ENCODE measurements at regions of chr5 and their contacts with region 1.

Region 1: GRCh38 chr5:154405078-154405792 is 40.6 kb upstream of the SAP30L start:
- DNase-seq: peak; percentile 82
- ATAC-seq: peak; percentile 98
- H3K4me3 ChIP-seq: peak overlapping the region in 4 of 5 experiments; percentile 15 to 48 (median 40)
- H3K4me3 Mint-ChIP-seq: peak overlapping the region; percentile 64
- H3K27ac ChIP-seq: no peak overlapping the region
- H3K27ac Mint-ChIP-seq: no peak overlapping the region
- H3K4me1 ChIP-seq: peaks cover 3 to 11% of the 10 kb centered on the region in 2 donors
- H3K4me1 Mint-ChIP-seq: peaks cover 13% of the 10 kb centered on the region
- H3K27me3 ChIP-seq: no peaks in the 10 kb centered on the region
- H3K27me3 Mint-ChIP-seq: no peaks in the 10 kb centered on the region
- CTCF ChIP-seq: peak; percentile 87

Region 2: GRCh38 chr5:153974131-153974812 is 431.0 kb before region 1 on chr5:
- CTCF ChIA-PET with region 1: interaction called, 25 read pairs
- POLR2A ChIA-PET with region 1: no interaction called
- intact Hi-C with region 1: no loop called
- DNase-seq: peak; percentile 49
- ATAC-seq: no peak
- H3K4me3 ChIP-seq: no peak overlapping the region
- H3K4me3 Mint-ChIP-seq: no peak overlapping the region
- H3K27ac ChIP-seq: no peak overlapping the region
- H3K27ac Mint-ChIP-seq: no peak overlapping the region
- H3K4me1 ChIP-seq: peaks cover 0 to 3% of the 10 kb centered on the region in 2 donors
- H3K4me1 Mint-ChIP-seq: no peaks in the 10 kb centered on the region
- H3K27me3 ChIP-seq: peaks cover 0 to 8% (median 3%) of the 10 kb centered on the region in 4 experiments
- H3K27me3 Mint-ChIP-seq: peaks cover 32% of the 10 kb centered on the region
- CTCF ChIP-seq: peak; percentile 80

Region 3: GRCh38 chr5:154077696-154078095 is 327.5 kb before region 1 on chr5:
- CTCF ChIA-PET with region 1: interaction called, 295 read pairs
- POLR2A ChIA-PET with region 1: interaction called, 3 read pairs
- intact Hi-C with region 1: no loop called
- DNase-seq: no peak
- ATAC-seq: no peak
- H3K4me3 ChIP-seq: no peak overlapping the region
- H3K4me3 Mint-ChIP-seq: no peak overlapping the region
- H3K27ac ChIP-seq: no peak overlapping the region
- H3K27ac Mint-ChIP-seq: no peak overlapping the region
- H3K4me1 ChIP-seq: no peaks in the 10 kb centered on the region
- H3K4me1 Mint-ChIP-seq: no peaks in the 10 kb centered on the region
- H3K27me3 ChIP-seq: no peaks in the 10 kb centered on the region
- H3K27me3 Mint-ChIP-seq: peaks cover 14% of the 10 kb centered on the region
- CTCF ChIP-seq: no peak

Region 4: GRCh38 chr5:154179846-154180710 is 225.2 kb before region 1 on chr5:
- CTCF ChIA-PET with region 1: interaction called, 36 read pairs
- POLR2A ChIA-PET with region 1: no interaction called
- intact Hi-C with region 1: no loop called
- DNase-seq: peak; percentile 64
- ATAC-seq: peak; percentile 84
- H3K4me3 ChIP-seq: no peak overlapping the region
- H3K4me3 Mint-ChIP-seq: no peak overlapping the region
- H3K27ac ChIP-seq: no peak overlapping the region
- H3K27ac Mint-ChIP-seq: no peak overlapping the region
- H3K4me1 ChIP-seq: peaks cover 0 to 7% of the 10 kb centered on the region in 2 donors
- H3K4me1 Mint-ChIP-seq: peaks cover 18% of the 10 kb centered on the region
- H3K27me3 ChIP-seq: no peaks in the 10 kb centered on the region
- H3K27me3 Mint-ChIP-seq: peaks cover 14% of the 10 kb centered on the region
- CTCF ChIP-seq: peak; percentile 92

Region 5: GRCh38 chr5:154196955-154197652 is 208.1 kb before region 1 on chr5:
- CTCF ChIA-PET with region 1: interaction called, 17 read pairs
- POLR2A ChIA-PET with region 1: no interaction called
- intact Hi-C with region 1: no loop called
- DNase-seq: peak; percentile 17
- ATAC-seq: no peak
- H3K4me3 ChIP-seq: no peak overlapping the region
- H3K4me3 Mint-ChIP-seq: peak overlapping the region; percentile 12
- H3K27ac ChIP-seq: no peak overlapping the region
- H3K27ac Mint-ChIP-seq: no peak overlapping the region
- H3K4me1 ChIP-seq: peaks cover 17 to 37% of the 10 kb centered on the region in 2 donors
- H3K4me1 Mint-ChIP-seq: peaks cover 66% of the 10 kb centered on the region
- H3K27me3 ChIP-seq: no peaks in the 10 kb centered on the region
- H3K27me3 Mint-ChIP-seq: no peaks in the 10 kb centered on the region
- CTCF ChIP-seq: no peak

Region 6: GRCh38 chr5:154384480-154385235 is 20.6 kb before region 1 on chr5:
- CTCF ChIA-PET with region 1: interaction called, 29 read pairs
- POLR2A ChIA-PET with region 1: no interaction called
- intact Hi-C with region 1: no loop called
- DNase-seq: peak; percentile 89
- ATAC-seq: peak; percentile 86
- H3K4me3 ChIP-seq: peak overlapping the region in 4 of 5 experiments; percentile 18 to 56 (median 26)
- H3K4me3 Mint-ChIP-seq: peak overlapping the region; percentile 87
- H3K27ac ChIP-seq: peak overlapping the region; percentile 88 to 95
- H3K27ac Mint-ChIP-seq: peak overlapping the region; percentile 94
- H3K4me1 ChIP-seq: peaks cover 25 to 32% of the 10 kb centered on the region in 2 donors
- H3K4me1 Mint-ChIP-seq: peaks cover 31% of the 10 kb centered on the region
- H3K27me3 ChIP-seq: no peaks in the 10 kb centered on the region
- H3K27me3 Mint-ChIP-seq: no peaks in the 10 kb centered on the region
- CTCF ChIP-seq: no peak

Region 7: GRCh38 chr5:154421868-154422267 is 16.6 kb after region 1 on chr5:
- CTCF ChIA-PET with region 1: interaction called, 17 read pairs
- POLR2A ChIA-PET with region 1: no interaction called
- intact Hi-C with region 1: no loop called
- DNase-seq: no peak
- ATAC-seq: no peak
- H3K4me3 ChIP-seq: no peak overlapping the region
- H3K4me3 Mint-ChIP-seq: no peak overlapping the region
- H3K27ac ChIP-seq: no peak overlapping the region
- H3K27ac Mint-ChIP-seq: no peak overlapping the region
- H3K4me1 ChIP-seq: peaks cover 0 to 4% of the 10 kb centered on the region in 2 donors
- H3K4me1 Mint-ChIP-seq: peaks cover 2% of the 10 kb centered on the region
- H3K27me3 ChIP-seq: no peaks in the 10 kb centered on the region
- H3K27me3 Mint-ChIP-seq: no peaks in the 10 kb centered on the region
- CTCF ChIP-seq: no peak

Region 8: DNA sequence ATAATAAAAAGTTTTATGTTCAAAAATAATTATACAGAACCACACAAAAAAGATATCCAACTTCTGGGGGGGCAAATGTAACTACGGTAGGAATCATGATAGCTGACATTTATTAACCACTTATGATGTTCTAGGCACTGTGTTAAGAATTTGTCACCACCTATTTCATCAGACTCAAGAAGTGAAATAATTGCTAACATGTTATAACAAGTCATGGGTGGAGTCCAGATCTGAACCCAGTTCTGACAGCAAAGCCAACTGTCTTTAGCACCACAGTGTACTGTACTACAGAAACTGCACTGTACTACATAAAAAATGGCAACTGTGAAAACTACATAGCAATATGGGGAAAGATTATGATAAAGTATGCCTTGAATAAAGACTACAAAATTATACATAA is 37.6 kb after region 1 on chr5:
- CTCF ChIA-PET with region 1: no interaction called
- POLR2A ChIA-PET with region 1: no interaction called
- intact Hi-C with region 1: no loop called
- DNase-seq: no peak
- ATAC-seq: no peak
- H3K4me3 ChIP-seq: no peak overlapping the region
- H3K4me3 Mint-ChIP-seq: no peak overlapping the region
- H3K27ac ChIP-seq: no peak overlapping the region
- H3K27ac Mint-ChIP-seq: no peak overlapping the region
- H3K4me1 ChIP-seq: peaks cover 16 to 18% of the 10 kb centered on the region in 2 donors
- H3K4me1 Mint-ChIP-seq: peaks cover 29% of the 10 kb centered on the region
- H3K27me3 ChIP-seq: no peaks in the 10 kb centered on the region
- H3K27me3 Mint-ChIP-seq: no peaks in the 10 kb centered on the region
- CTCF ChIP-seq: no peak

Region 9: DNA sequence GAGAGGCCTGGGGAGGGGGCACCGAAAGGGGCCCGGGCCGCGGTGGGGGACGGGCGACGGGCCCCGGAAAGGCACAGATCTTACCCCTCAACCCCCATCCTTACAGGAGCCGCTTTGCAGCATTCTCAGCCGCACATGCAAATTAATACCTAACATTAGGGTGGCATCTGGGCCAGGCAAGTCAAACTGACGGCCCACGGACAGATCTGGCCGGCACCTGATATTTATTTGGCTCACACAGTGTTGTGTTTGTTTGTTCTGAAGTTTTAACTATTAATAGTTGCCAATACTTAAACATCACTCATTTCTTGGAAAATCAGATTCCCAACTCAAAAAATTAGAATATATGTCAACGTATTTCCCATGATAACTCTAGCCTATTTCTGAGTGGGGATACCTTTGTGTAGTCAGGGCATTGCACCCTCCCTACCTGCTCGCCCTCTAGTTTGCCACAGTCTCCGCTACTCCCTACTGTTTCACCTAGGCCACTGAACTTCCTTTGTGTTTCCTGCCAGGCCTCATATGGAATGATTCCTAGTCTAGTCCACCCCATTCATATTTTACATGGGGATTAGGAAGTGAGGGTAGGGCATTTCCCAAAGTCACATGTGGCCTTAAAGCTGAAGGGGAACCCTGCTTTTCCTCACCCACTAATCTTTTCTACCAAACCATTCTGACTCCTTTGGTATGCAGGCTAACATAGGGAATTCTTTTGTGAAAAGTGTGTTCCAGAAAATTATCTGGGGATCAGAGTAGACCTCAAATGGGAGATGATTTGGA is 278.1 kb after region 1 on chr5:
- CTCF ChIA-PET with region 1: no interaction called
- POLR2A ChIA-PET with region 1: no interaction called
- intact Hi-C with region 1: no loop called
- DNase-seq: no peak
- ATAC-seq: peak; percentile 44
- H3K4me3 ChIP-seq: peak overlapping the region; percentile 21 to 75 (median 57)
- H3K4me3 Mint-ChIP-seq: peak overlapping the region; percentile 78
- H3K27ac ChIP-seq: peak overlapping the region in 1 of 2 donors; percentile 55
- H3K27ac Mint-ChIP-seq: peak overlapping the region; percentile 42
- H3K4me1 ChIP-seq: peaks cover 4 to 17% of the 10 kb centered on the region in 2 donors
- H3K4me1 Mint-ChIP-seq: peaks cover 4% of the 10 kb centered on the region
- H3K27me3 ChIP-seq: peaks cover 0 to 8% (median 2%) of the 10 kb centered on the region in 4 experiments
- H3K27me3 Mint-ChIP-seq: no peaks in the 10 kb centered on the region
- CTCF ChIP-seq: no peak

Measured in B cell (primary cell).